PC-3 (cell line): ENCODE measurements at regions of chr2 and their contacts with region 1.

Region 1: GRCh38 chr2:232300894-232301387 is 77.6 kb upstream of the ALPP start:
- DNase-seq: peak; percentile 95
- ATAC-seq: peak; percentile 98
- H3K4me3 ChIP-seq: no peak overlapping the region
- H3K27ac ChIP-seq: peak overlapping the region; percentile 84
- H3K4me1 ChIP-seq: peaks cover 16% of the 10 kb centered on the region
- H3K27me3 ChIP-seq: no peaks in the 10 kb centered on the region
- CTCF ChIP-seq: peak; percentile 50

Region 2: GRCh38 chr2:232236200-232236599 is 64.7 kb before region 1 on chr2:
- CTCF ChIA-PET with region 1: no interaction called
- POLR2A ChIA-PET with region 1: no interaction called
- intact Hi-C with region 1: loop called (anchors 5 kb)
- DNase-seq: peak; percentile 75
- ATAC-seq: peak; percentile 69
- H3K4me3 ChIP-seq: no peak overlapping the region
- H3K27ac ChIP-seq: peak overlapping the region; percentile 30
- H3K4me1 ChIP-seq: peaks cover 50% of the 10 kb centered on the region
- H3K27me3 ChIP-seq: no peaks in the 10 kb centered on the region
- CTCF ChIP-seq: no peak

Region 3: GRCh38 chr2:232479341-232480200 is 178.6 kb after region 1 on chr2:
- CTCF ChIA-PET with region 1: no interaction called
- POLR2A ChIA-PET with region 1: no interaction called
- intact Hi-C with region 1: no loop called
- DNase-seq: no peak
- ATAC-seq: no peak
- H3K4me3 ChIP-seq: no peak overlapping the region
- H3K27ac ChIP-seq: no peak overlapping the region
- H3K4me1 ChIP-seq: no peaks in the 10 kb centered on the region
- H3K27me3 ChIP-seq: peaks cover 8% of the 10 kb centered on the region
- CTCF ChIP-seq: no peak